Heart left ventricle (tissue), 16 donors: ENCODE measurements at regions of chr5 and their contacts with region 1.

Region 1: GRCh38 chr5:73454351-73455036 is 5.9 kb upstream of the FOXD1 start:
- DNase-seq: no peak
- ATAC-seq: peak in 2 of 4 donors; percentile 54 to 63
- H3K4me3 ChIP-seq: no peak overlapping the region
- H3K27ac ChIP-seq: no peak overlapping the region
- H3K4me1 ChIP-seq: peaks cover 0 to 10% (median 7%) of the 10 kb centered on the region in 12 donors
- H3K27me3 ChIP-seq: peaks cover 36 to 95% (median 58%) of the 10 kb centered on the region in 9 donors
- CTCF ChIP-seq: peak; percentile 40 to 78 (median 62)
- POLR2A ChIP-seq: no peak

Region 2: GRCh38 chr5:73081093-73081492 is 373.4 kb before region 1 on chr5:
- intact Hi-C with region 1: loop called in 7 of 10 experiments (anchors 5 to 10 kb)
- DNase-seq: no peak
- ATAC-seq: no peak
- H3K4me3 ChIP-seq: no peak overlapping the region
- H3K27ac ChIP-seq: no peak overlapping the region
- H3K4me1 ChIP-seq: no peaks in the 10 kb centered on the region
- H3K27me3 ChIP-seq: no peaks in the 10 kb centered on the region
- CTCF ChIP-seq: no peak
- POLR2A ChIP-seq: no peak

Region 3: DNA sequence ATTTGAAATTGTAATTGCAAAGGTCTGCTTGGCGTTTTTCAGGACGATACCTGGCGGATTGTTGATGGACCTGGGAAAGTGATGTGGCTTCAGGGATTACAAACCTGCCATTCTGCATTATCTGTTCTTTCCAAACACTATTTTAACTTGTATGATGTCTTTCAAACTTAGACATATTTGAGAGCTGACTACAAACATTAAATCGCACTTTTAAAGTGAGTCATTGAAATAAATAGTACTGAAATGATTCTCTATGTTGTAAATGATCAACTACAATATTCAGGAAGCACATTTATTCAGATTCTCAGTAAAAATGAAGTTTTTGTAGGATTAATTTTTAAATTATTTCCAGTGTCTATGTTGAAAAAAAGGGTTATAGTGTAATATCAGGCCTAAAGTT is 366.5 kb before region 1 on chr5:
- intact Hi-C with region 1: loop called in 7 of 10 experiments (anchors 5 to 10 kb)
- DNase-seq: no peak
- ATAC-seq: no peak
- H3K4me3 ChIP-seq: no peak overlapping the region
- H3K27ac ChIP-seq: no peak overlapping the region
- H3K4me1 ChIP-seq: no peaks in the 10 kb centered on the region
- H3K27me3 ChIP-seq: no peaks in the 10 kb centered on the region
- CTCF ChIP-seq: no peak
- POLR2A ChIP-seq: no peak

Region 4: DNA sequence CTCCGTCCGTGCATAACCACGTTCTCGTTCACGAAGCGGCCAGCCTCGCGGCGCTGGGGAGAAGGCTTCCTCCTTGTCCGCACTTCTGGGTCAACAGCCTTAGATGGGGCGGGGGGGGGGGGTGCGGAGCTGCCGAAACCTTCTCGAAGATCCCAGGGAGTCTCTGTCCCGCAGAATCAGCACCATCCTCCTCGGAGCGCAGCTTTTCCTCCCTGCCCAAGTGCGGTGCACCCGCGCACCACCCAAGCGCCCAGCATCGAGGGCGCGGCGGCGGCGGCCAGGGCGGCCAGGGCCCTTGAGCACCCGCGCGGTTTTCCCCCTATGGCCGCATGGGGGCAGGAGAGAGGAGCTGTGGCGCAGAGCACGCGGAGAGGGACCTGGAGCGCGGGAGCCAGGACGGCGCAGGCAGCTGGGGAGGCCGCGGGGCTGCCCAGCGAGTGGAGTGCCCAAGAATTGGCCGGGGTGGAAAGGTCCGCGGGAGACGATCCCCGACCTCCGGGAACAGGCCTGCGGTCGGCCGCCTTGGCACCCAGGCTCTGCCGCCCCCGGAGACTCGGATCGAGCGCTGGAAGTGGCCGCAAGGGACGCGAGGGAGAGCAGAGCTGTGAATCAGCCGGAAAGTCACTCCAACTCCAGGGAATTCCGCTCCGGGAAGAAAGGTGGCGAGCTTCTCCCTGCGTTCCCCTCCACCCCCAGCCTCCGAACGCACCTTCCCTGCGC is 238.4 kb before region 1 on chr5:
- intact Hi-C with region 1: loop called in 9 of 10 experiments (anchors 2 to 5 kb)
- DNase-seq: peak; percentile 67 to 85 (median 68)
- ATAC-seq: peak; percentile 77 to 99 (median 98)
- H3K4me3 ChIP-seq: peak overlapping the region in 10 of 12 donors; percentile 24 to 50 (median 42)
- H3K27ac ChIP-seq: no peak overlapping the region
- H3K4me1 ChIP-seq: peaks cover 0 to 15% (median 8%) of the 10 kb centered on the region in 12 donors
- H3K27me3 ChIP-seq: peaks cover 7 to 96% (median 68%) of the 10 kb centered on the region in 9 donors
- CTCF ChIP-seq: peak; percentile 69 to 90 (median 82)
- POLR2A ChIP-seq: no peak

Region 5: GRCh38 chr5:73233347-73234200 is 220.9 kb before region 1 on chr5:
- intact Hi-C with region 1: loop called in 1 of 10 experiments (anchors 5 kb)
- DNase-seq: peak in 2 of 5 donors; percentile 25 to 30
- ATAC-seq: peak in 3 of 4 donors; percentile 52 to 65 (median 60)
- H3K4me3 ChIP-seq: peak overlapping the region; percentile 21 to 57 (median 46)
- H3K27ac ChIP-seq: no peak overlapping the region
- H3K4me1 ChIP-seq: peaks cover 0 to 25% (median 20%) of the 10 kb centered on the region in 12 donors
- H3K27me3 ChIP-seq: peaks cover 30 to 99% (median 63%) of the 10 kb centered on the region in 9 donors
- CTCF ChIP-seq: peak in 2 of 12 donors; percentile 5 to 10
- POLR2A ChIP-seq: no peak